ENCODE measurements at regions of chr16 and their contacts with region 1.

Region 1: DNA sequence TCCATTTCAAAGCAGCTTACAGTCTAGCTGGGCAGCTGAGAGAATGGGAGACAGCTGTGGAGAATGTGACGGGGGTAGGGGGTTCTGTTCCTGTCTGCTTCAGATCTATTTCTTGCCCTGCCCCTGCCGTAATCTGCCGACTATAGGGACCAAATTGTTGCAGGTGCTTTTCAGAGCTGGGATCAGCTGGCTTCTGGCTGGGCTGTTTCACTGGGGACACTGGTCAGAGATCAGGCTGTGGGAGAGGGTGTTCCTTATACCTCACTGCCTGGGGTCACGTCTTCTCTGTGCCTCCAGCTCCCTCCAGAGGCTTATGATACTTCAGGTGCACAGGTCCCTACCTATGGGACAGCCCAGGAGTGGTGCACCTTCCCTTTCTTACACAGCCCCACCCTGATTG is 514.9 kb upstream of the GOT2 start:
- DNase-seq: no peak
- ATAC-seq: peak; percentile 44; the same call in 1 of the 3 replicates
- H3K4me3 ChIP-seq: no peak overlapping the region
- H3K27ac ChIP-seq: no peak overlapping the region
- H3K4me1 ChIP-seq: no peaks in the 10 kb centered on the region
- H3K27me3 ChIP-seq: no peaks in the 10 kb centered on the region
- CTCF ChIP-seq: no peak
- EP300 ChIP-seq: no peak
- POLR2A ChIP-seq: no peak
- RAD21 ChIP-seq: no peak

Region 2: GRCh38 chr16:59179446-59180082 is 69.4 kb before region 1 on chr16:
- CTCF ChIA-PET with region 1: no interaction called
- POLR2A ChIA-PET with region 1: no interaction called
- RAD21 ChIA-PET with region 1: no interaction called
- SMC1A ChIA-PET with region 1: no interaction called
- in situ Hi-C with region 1: no loop called
- intact Hi-C with region 1: loop called (anchors 10 kb)
- DNase-seq: no peak
- ATAC-seq: no peak
- H3K4me3 ChIP-seq: no peak overlapping the region
- H3K27ac ChIP-seq: no peak overlapping the region
- H3K4me1 ChIP-seq: no peaks in the 10 kb centered on the region
- H3K27me3 ChIP-seq: no peaks in the 10 kb centered on the region
- CTCF ChIP-seq: no peak
- EP300 ChIP-seq: no peak
- POLR2A ChIP-seq: no peak
- RAD21 ChIP-seq: no peak

Region 3: DNA sequence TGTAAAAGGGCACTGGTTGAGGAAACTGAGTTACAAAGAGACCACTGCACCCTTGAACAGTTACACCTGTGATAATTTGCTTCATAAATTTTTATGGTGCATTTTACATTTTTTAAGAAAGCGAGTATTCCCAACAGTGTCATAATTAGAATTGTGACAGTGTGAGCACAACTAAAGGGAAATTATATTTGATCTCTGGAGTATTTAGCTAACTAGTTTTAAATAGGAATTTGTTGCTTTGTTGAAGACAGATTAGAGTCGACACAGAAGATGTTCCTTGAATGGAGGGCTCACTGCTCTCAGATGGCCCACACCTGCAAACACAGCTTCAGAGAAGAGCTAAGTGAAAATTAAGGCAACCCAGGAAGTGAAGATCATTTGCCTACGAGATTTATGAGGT is 40.1 kb after region 1 on chr16:
- CTCF ChIA-PET with region 1: no interaction called
- POLR2A ChIA-PET with region 1: no interaction called
- RAD21 ChIA-PET with region 1: no interaction called
- SMC1A ChIA-PET with region 1: no interaction called
- in situ Hi-C with region 1: no loop called
- intact Hi-C with region 1: no loop called
- DNase-seq: no peak
- ATAC-seq: no peak
- H3K4me3 ChIP-seq: no peak overlapping the region
- H3K27ac ChIP-seq: no peak overlapping the region
- H3K4me1 ChIP-seq: no peaks in the 10 kb centered on the region
- H3K27me3 ChIP-seq: no peaks in the 10 kb centered on the region
- CTCF ChIP-seq: no peak
- EP300 ChIP-seq: no peak
- POLR2A ChIP-seq: no peak
- RAD21 ChIP-seq: no peak

Region 4: DNA sequence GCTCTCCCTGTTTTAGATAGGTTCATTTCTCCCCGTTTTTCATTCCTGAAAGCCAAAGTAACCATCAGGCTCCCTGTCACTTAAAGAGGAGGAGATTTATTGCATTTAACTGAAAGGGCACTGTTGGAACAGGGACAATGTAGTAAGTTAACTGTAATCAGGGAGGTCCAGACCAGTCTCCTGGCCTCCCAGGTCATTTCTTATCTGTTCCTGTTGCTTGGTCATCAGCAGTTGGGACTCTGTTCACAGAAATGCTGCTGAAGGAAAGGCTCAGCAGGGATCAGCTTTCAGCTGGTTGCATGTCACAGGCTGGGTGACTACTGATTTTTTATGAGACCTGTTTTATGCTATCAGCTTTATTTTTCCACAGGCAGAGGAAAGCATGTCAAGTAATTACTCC is 107.7 kb after region 1 on chr16:
- CTCF ChIA-PET with region 1: no interaction called
- POLR2A ChIA-PET with region 1: no interaction called
- RAD21 ChIA-PET with region 1: no interaction called
- SMC1A ChIA-PET with region 1: no interaction called
- in situ Hi-C with region 1: no loop called
- intact Hi-C with region 1: no loop called
- DNase-seq: no peak
- ATAC-seq: no peak
- H3K4me3 ChIP-seq: no peak overlapping the region
- H3K27ac ChIP-seq: no peak overlapping the region
- H3K4me1 ChIP-seq: no peaks in the 10 kb centered on the region
- H3K27me3 ChIP-seq: no peaks in the 10 kb centered on the region
- CTCF ChIP-seq: no peak
- EP300 ChIP-seq: no peak
- POLR2A ChIP-seq: no peak
- RAD21 ChIP-seq: no peak